Endothelial cell of umbilical vein (primary cell): ENCODE measurements at regions of chr19 and their contacts with region 1.

Region 1: DNA sequence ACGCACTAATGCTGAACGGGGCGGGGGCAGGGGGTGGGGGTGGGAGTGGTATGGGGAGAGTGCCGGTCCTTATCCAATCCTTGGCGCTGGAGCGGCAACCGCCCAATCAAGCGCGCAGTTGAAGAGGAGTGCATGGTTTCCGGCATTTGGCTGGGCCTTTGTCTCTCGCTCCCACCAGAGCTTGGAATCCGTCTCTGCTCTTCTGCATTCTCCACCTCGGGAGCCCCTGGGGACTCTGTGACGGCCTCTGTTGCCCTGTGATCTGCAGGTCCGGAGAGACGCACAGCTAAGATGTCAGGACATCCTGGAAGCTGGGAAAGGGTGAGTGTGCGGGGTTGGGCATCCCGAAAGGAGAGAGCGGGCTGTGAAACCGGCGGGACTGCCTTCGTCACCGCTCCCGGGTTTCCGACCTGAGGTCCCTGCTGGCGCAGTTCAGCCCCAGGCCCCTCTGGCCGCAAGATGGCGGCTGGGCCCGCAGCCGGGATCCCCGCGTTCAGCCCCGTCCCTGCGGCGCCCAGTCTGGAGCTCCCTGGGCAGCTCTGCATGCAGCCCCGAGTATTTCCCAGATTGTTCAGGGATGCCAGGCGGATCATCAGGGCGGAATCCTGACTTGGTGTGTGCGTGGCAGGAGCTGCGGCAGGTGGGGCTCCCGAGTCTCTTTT is 53.6 kb upstream of the ZNF254 start:
- DNase-seq: peak; percentile 93
- H3K4me3 ChIP-seq: peak overlapping the region; percentile 45 to 82 (median 75)
- H3K27ac ChIP-seq: peak overlapping the region; percentile 83
- H3K4me1 ChIP-seq: no peaks in the 10 kb centered on the region
- H3K27me3 ChIP-seq: no peaks in the 10 kb centered on the region
- CTCF ChIP-seq: no peak
- POLR2A ChIP-seq: peak; percentile 92

Region 2: GRCh38 chr19:23075031-23075760 is 958.2 kb before region 1 on chr19:
- CTCF ChIA-PET with region 1: no interaction called
- POLR2A ChIA-PET with region 1: no interaction called
- dilution Hi-C with region 1: no loop called
- intact Hi-C with region 1: loop called (anchors 2 kb)
- DNase-seq: peak; percentile 41
- H3K4me3 ChIP-seq: peak overlapping the region; percentile 43 to 78 (median 71)
- H3K27ac ChIP-seq: peak overlapping the region; percentile 78
- H3K4me1 ChIP-seq: peaks cover 6% of the 10 kb centered on the region
- H3K27me3 ChIP-seq: no peaks in the 10 kb centered on the region
- CTCF ChIP-seq: no peak
- POLR2A ChIP-seq: no peak

Region 3: GRCh38 chr19:23686621-23687423 is 346.6 kb before region 1 on chr19 and contains the start of gene ZNF675:
- CTCF ChIA-PET with region 1: no interaction called
- POLR2A ChIA-PET with region 1: no interaction called
- dilution Hi-C with region 1: no loop called
- intact Hi-C with region 1: loop called (anchors 10 kb)
- DNase-seq: peak; percentile 90
- H3K4me3 ChIP-seq: peak within 1 kb of the TSS; percentile 61 to 90 (median 86)
- H3K27ac ChIP-seq: peak within 1 kb of the TSS; percentile 81
- H3K4me1 ChIP-seq: peaks cover 5% of the 10 kb centered on the region
- H3K27me3 ChIP-seq: no peaks in the 10 kb centered on the region
- CTCF ChIP-seq: no peak
- POLR2A ChIP-seq: peak; percentile 61
- total RNA-seq, gene ZNF675: 7.6 and 9.3 TPM in 2 replicates

Region 4: DNA sequence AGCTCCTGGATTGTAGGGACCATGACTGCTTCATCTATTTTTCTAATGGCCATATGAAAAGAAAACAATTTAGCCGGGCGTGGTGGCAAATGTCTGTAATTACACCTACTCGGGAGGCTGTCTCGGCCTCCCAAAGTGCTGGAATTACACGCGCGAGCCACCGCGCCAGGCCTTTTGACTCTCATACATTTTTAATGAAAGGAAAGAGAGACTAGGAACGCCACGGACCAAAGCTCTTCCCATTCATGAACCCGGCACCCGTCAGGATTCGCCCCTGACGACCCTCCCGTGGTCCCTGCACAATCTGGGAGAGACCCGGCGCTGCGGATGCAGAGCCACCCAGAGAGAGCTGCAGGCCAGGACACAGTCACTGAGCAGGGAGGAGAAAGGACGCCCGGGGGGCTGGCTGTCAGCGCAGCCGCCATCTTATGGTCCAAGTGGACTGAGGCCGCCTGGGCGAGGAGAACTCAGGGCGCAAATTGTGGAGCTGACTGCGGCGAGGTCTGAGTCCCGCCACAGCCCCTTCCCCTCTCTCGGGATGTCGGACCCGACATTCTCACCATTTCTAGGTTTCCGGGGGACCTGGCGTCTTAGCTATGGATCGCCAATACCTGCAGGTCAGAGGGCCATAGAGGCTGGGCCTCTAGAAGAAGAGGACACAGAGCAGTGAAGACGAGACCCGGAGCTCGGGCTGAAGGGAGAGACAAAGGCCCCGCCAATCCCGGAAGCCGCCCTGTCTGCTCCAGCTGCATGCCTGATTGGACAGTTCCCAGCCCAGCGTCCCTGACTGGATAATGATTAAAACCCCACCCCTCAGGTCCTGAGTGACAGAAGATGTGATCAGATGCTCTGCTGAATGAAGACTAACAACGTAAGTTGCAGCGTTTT is 275.0 kb before region 1 on chr19 and contains the start of gene ZNF681:
- CTCF ChIA-PET with region 1: no interaction called
- POLR2A ChIA-PET with region 1: no interaction called
- dilution Hi-C with region 1: no loop called
- intact Hi-C with region 1: loop called (anchors 1 kb)
- DNase-seq: peak; percentile 18
- H3K4me3 ChIP-seq: peak within 1 kb of the TSS in 2 of 3 experiments; percentile 25 to 35
- H3K27ac ChIP-seq: peak within 1 kb of the TSS; percentile 12
- H3K4me1 ChIP-seq: no peaks in the 10 kb centered on the region
- H3K27me3 ChIP-seq: no peaks in the 10 kb centered on the region
- CTCF ChIP-seq: no peak
- POLR2A ChIP-seq: no peak
- total RNA-seq, gene ZNF681: 0.97 and 1.9 TPM in 2 replicates

Region 5: GRCh38 chr19:23817519-23817918 is 215.9 kb before region 1 on chr19:
- CTCF ChIA-PET with region 1: no interaction called
- POLR2A ChIA-PET with region 1: no interaction called
- dilution Hi-C with region 1: no loop called
- intact Hi-C with region 1: no loop called
- DNase-seq: no peak
- H3K4me3 ChIP-seq: no peak overlapping the region
- H3K27ac ChIP-seq: no peak overlapping the region
- H3K4me1 ChIP-seq: no peaks in the 10 kb centered on the region
- H3K27me3 ChIP-seq: no peaks in the 10 kb centered on the region
- CTCF ChIP-seq: peak in 1 of 2 donors; percentile 7
- POLR2A ChIP-seq: no peak

Region 6: GRCh38 chr19:23914402-23915301 is 118.8 kb before region 1 on chr19 and contains the start of gene ZNF726:
- CTCF ChIA-PET with region 1: interaction called, 3 read pairs
- POLR2A ChIA-PET with region 1: no interaction called
- dilution Hi-C with region 1: no loop called
- intact Hi-C with region 1: loop called (anchors 1 kb)
- DNase-seq: peak; percentile 90
- H3K4me3 ChIP-seq: peak within 1 kb of the TSS; percentile 34 to 83 (median 74)
- H3K27ac ChIP-seq: peak within 1 kb of the TSS; percentile 42
- H3K4me1 ChIP-seq: no peaks in the 10 kb centered on the region
- H3K27me3 ChIP-seq: no peaks in the 10 kb centered on the region
- CTCF ChIP-seq: no peak
- POLR2A ChIP-seq: no peak
- total RNA-seq, gene ZNF726: 2.9 and 4.7 TPM in 2 replicates

Region 7: DNA sequence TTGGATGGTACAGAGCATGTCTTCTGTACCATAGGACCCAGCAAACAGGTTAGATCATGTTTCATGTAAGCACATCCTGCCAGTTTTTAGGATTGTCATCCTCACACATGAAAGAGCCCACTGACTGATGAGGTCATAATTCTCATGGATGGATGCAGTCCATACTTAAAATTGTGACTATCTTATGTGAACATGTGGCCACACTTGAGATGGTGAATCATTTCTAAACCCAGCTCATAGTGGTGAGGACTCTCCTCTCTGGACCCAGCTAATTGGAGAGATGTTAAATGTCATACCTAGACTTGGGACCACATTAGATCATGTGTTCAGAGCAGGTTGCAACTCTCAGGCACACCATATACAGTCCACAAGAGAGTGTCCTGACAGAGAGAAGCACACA is 28.8 kb after region 1 on chr19:
- CTCF ChIA-PET with region 1: no interaction called
- POLR2A ChIA-PET with region 1: no interaction called
- dilution Hi-C with region 1: no loop called
- intact Hi-C with region 1: no loop called
- DNase-seq: no peak
- H3K4me3 ChIP-seq: no peak overlapping the region
- H3K27ac ChIP-seq: no peak overlapping the region
- H3K4me1 ChIP-seq: no peaks in the 10 kb centered on the region
- H3K27me3 ChIP-seq: no peaks in the 10 kb centered on the region
- CTCF ChIP-seq: no peak
- POLR2A ChIP-seq: no peak

Region 8: GRCh38 chr19:24086974-24087595 is 53.7 kb after region 1 on chr19 and contains the start of gene ZNF254:
- CTCF ChIA-PET with region 1: interaction called, 9 read pairs
- POLR2A ChIA-PET with region 1: interaction called, 14 read pairs
- dilution Hi-C with region 1: no loop called
- intact Hi-C with region 1: loop called (anchors 10 kb)
- DNase-seq: peak; percentile 97
- H3K4me3 ChIP-seq: peak within 1 kb of the TSS; percentile 92 to 96 (median 93)
- H3K27ac ChIP-seq: peak within 1 kb of the TSS; percentile 96
- H3K4me1 ChIP-seq: peaks cover 4% of the 10 kb centered on the region
- H3K27me3 ChIP-seq: no peaks in the 10 kb centered on the region
- CTCF ChIP-seq: no peak
- POLR2A ChIP-seq: peak; percentile 91
- total RNA-seq, gene ZNF254: 16.0 TPM in 2 replicates

Region 9: GRCh38 chr19:24159707-24160106 is 126.3 kb after region 1 on chr19:
- CTCF ChIA-PET with region 1: no interaction called
- POLR2A ChIA-PET with region 1: no interaction called
- dilution Hi-C with region 1: no loop called
- intact Hi-C with region 1: no loop called
- DNase-seq: no peak
- H3K4me3 ChIP-seq: no peak overlapping the region
- H3K27ac ChIP-seq: no peak overlapping the region
- H3K4me1 ChIP-seq: no peaks in the 10 kb centered on the region
- H3K27me3 ChIP-seq: no peaks in the 10 kb centered on the region
- CTCF ChIP-seq: peak in 1 of 2 donors; percentile 24
- POLR2A ChIP-seq: no peak